Lower leg skin (tissue), 4 donors: ENCODE measurements at regions of chr21 and their contacts with region 1.

Region 1: GRCh38 chr21:36504067-36505058 is 24.4 kb upstream of the CLDN14 start:
- DNase-seq: peak in 1 of 2 donors; percentile 28
- H3K4me3 ChIP-seq: no peak overlapping the region
- CTCF ChIP-seq: peak in 1 of 3 donors; percentile 67
- POLR2A ChIP-seq: no peak

Region 2: DNA sequence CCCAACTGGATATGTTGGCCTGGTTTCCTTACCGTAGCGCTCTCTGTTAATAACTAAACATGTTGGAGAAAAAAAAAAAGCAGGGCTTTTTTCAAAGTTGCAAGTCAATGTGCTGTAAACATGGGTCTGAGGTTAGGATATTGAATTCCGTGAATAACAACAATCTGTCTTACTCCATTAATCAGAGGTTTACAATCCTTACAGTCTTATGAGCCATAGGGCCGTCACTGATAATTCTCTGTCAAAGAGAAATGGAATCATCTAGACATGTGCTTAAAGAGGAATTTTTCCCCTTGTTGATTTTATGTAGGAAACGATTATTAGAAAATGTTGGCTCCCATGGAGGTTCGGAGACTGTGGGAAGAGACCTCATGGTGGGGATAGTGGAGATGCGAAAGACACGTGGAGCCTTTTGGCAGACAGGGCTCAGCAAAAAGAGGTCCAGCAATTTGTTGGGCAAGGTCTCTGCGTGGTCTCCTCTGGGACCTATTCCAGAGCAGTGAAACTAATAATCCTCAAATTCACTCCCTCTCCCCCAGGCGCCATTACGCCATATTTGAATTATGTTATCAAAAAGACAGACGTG is 59.1 kb after region 1 on chr21:
- intact Hi-C with region 1: no loop called
- DNase-seq: peak in 1 of 2 donors; percentile 14
- H3K4me3 ChIP-seq: no peak overlapping the region
- CTCF ChIP-seq: no peak
- POLR2A ChIP-seq: no peak

Region 3: GRCh38 chr21:36576441-36576840 is 72.1 kb after region 1 on chr21:
- intact Hi-C with region 1: no loop called
- DNase-seq: no peak
- H3K4me3 ChIP-seq: no peak overlapping the region
- CTCF ChIP-seq: no peak
- POLR2A ChIP-seq: no peak

Region 4: DNA sequence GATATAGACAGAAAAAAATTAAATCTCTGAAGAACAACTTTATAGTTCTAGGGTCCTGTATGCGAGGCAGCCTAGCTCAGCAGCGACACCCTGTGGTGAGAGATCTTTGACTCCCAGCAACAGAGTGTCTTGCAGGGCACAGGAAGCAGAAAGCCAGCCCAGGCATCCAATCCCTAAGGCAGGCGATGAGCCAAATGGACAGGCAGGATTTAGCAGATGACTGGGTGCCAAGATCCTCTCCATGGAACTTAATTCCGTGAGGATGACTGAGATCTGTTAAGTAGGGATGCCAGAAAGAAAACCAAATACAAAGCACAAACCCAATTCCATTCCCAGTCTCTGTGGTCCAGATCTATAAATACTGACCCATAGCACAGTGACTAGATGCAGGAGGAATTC is 423.4 kb after region 1 on chr21:
- intact Hi-C with region 1: loop called (anchors 5 kb)
- DNase-seq: peak; percentile 69 to 94
- H3K4me3 ChIP-seq: no peak overlapping the region
- CTCF ChIP-seq: no peak
- POLR2A ChIP-seq: no peak

Region 5: GRCh38 chr21:37009740-37010341 is 505.5 kb after region 1 on chr21:
- intact Hi-C with region 1: loop called (anchors 10 kb)
- DNase-seq: peak; percentile 55 to 94
- H3K4me3 ChIP-seq: no peak overlapping the region
- CTCF ChIP-seq: peak in 1 of 3 donors; percentile 66
- POLR2A ChIP-seq: no peak